WTC11 (cell line): ENCODE measurements at regions of chr5 and their contacts with region 1.

Region 1: DNA sequence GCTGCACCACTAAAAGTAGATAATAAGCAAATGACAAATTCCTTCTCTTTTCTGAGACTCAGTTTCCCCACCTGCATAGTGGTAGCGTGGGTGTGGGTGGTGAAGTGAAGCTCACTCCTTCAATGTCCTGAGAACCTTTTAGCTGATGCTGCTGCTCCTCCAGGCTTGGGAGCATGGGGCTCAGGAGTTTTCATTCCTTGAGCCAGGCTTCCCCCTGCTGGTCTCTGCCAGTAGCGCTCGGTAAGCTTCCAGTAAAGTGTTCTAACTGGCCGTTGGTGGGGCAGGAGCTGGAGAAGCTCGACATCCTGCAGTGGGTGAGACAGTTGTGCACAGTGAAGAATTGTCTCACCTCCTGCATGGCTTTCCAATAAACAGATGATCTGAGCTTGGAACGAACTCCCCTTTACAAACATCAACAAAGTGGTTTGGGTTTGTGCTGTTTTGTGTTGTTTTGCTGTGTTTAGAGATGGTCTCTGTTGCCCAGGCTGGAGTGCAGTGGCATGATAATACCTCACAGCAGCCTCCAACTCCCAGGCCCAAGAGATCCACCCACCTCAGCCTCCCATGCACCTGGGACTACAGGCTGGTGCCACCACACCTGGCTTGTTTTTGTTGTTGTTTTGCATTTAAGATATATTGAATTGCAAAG is 34.6 kb downstream of the SPARC start:
- DNase-seq: peak; percentile 88
- ATAC-seq: peak; percentile 99
- H3K4me3 Mint-ChIP-seq: no peak overlapping the region
- H3K27ac Mint-ChIP-seq: no peak overlapping the region
- H3K4me1 Mint-ChIP-seq: peaks cover 4% of the 10 kb centered on the region
- H3K27me3 Mint-ChIP-seq: no peaks in the 10 kb centered on the region
- CTCF ChIP-seq: peak; percentile 71

Region 2: DNA sequence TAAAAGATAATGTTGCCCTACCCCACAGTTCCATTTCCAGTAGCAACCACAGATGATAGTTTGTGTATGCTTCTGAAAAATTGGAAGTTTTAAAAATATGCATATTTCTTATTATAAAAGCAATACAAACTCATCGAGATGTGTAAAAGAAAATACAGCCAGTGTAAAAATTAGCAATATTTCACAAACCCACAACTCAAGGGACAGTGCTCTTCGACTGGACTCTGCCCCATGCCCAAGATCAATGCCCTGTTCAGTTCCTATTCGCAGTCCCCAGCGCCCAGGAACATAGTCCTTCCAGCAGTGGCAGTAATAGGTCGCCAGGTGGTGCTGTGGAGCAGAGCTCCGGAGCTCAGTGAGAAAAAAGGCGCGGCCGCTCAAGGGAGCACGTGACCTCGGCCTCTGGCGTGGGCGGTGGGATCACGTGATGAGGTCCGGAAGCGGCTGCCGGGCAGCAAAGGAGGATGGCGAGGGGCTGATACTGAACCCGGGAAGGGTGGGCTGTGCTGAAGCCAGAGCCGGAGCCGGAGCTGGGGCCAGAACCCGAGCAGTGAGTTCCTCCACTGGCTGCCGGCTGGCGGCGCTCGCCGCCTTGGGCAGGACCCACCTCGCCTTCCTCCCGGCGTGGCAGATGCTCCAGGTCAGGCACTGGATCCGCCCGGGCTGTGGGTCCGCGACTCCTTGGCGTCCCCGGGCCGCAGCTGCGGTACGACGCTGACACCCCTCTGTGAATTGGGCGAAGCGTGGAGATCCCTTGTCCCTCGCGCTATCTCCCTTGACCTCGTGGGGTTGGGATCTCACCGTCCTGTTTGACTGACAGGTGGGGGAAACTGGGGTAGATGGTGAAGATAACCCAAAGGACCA is 204.7 kb before region 1 on chr5 and contains the start of gene SLC36A1:
- CTCF ChIA-PET with region 1: interaction called, 35 read pairs
- POLR2A ChIA-PET with region 1: no interaction called
- DNase-seq: peak; percentile 96
- ATAC-seq: peak; percentile 87
- H3K4me3 Mint-ChIP-seq: peak within 1 kb of the TSS; percentile 94
- H3K27ac Mint-ChIP-seq: peak within 1 kb of the TSS; percentile 75
- H3K4me1 Mint-ChIP-seq: peaks cover 17% of the 10 kb centered on the region
- H3K27me3 Mint-ChIP-seq: no peaks in the 10 kb centered on the region; the same call in 1 of the 2 replicates
- CTCF ChIP-seq: peak; percentile 91
- total RNA-seq, gene SLC36A1: 12.2 to 16.0 TPM (median 13.7 TPM) in 3 replicates

Region 3: DNA sequence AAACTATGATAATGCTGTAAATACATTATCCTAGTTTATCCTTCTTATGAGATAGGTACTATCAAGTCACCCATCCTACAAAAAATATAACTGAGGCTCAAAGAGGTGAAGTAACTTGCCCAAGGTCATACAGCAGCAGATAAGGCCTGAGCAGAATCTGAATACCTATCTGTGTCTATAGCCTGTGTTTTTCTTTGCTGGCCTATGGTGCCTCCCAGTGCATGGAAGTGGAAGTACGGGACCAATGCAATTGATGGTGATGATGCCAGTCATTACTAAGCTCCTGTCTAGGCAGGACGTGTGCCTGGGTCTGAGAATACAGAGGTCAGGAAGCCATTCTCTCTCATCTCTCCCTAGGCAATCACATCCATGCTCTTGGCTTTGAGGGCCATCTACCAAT is 128.8 kb before region 1 on chr5:
- CTCF ChIA-PET with region 1: interaction called, 87 read pairs
- POLR2A ChIA-PET with region 1: no interaction called
- DNase-seq: peak; percentile 62
- ATAC-seq: peak; percentile 97
- H3K4me3 Mint-ChIP-seq: no peak overlapping the region
- H3K27ac Mint-ChIP-seq: no peak overlapping the region
- H3K4me1 Mint-ChIP-seq: no peaks in the 10 kb centered on the region
- H3K27me3 Mint-ChIP-seq: no peaks in the 10 kb centered on the region
- CTCF ChIP-seq: peak; percentile 47; the same call in 1 of the 2 replicates

Region 4: GRCh38 chr5:151585970-151586369 is 66.2 kb before region 1 on chr5:
- CTCF ChIA-PET with region 1: interaction called, 28 read pairs
- POLR2A ChIA-PET with region 1: no interaction called
- DNase-seq: no peak
- ATAC-seq: no peak
- H3K4me3 Mint-ChIP-seq: no peak overlapping the region
- H3K27ac Mint-ChIP-seq: no peak overlapping the region
- H3K4me1 Mint-ChIP-seq: peaks cover 23% of the 10 kb centered on the region
- H3K27me3 Mint-ChIP-seq: peaks cover 7% of the 10 kb centered on the region
- CTCF ChIP-seq: no peak

Region 5: GRCh38 chr5:151686674-151687407 is 34.7 kb after region 1 on chr5 and contains the start of gene SPARC:
- CTCF ChIA-PET with region 1: interaction called, 10 read pairs
- POLR2A ChIA-PET with region 1: no interaction called
- DNase-seq: peak; percentile 78
- ATAC-seq: peak; percentile 93
- H3K4me3 Mint-ChIP-seq: peak within 1 kb of the TSS; percentile 87
- H3K27ac Mint-ChIP-seq: peak within 1 kb of the TSS; percentile 84
- H3K4me1 Mint-ChIP-seq: peaks cover 41% of the 10 kb centered on the region
- H3K27me3 Mint-ChIP-seq: no peaks in the 10 kb centered on the region
- CTCF ChIP-seq: no peak
- total RNA-seq, gene SPARC: 357 to 418 TPM (median 358 TPM) in 3 replicates

Region 6: GRCh38 chr5:151771259-151772028 is 119.3 kb after region 1 on chr5 and contains the start of gene G3BP1:
- CTCF ChIA-PET with region 1: interaction called, 12 read pairs
- POLR2A ChIA-PET with region 1: no interaction called
- DNase-seq: peak; percentile 100
- ATAC-seq: peak; percentile 86
- H3K4me3 Mint-ChIP-seq: peak within 1 kb of the TSS; percentile 94
- H3K27ac Mint-ChIP-seq: peak within 1 kb of the TSS; percentile 17
- H3K4me1 Mint-ChIP-seq: peaks cover 38% of the 10 kb centered on the region
- H3K27me3 Mint-ChIP-seq: no peaks in the 10 kb centered on the region
- CTCF ChIP-seq: no peak
- total RNA-seq, gene G3BP1: 396 to 413 TPM (median 400 TPM) in 3 replicates